Gastrocnemius medialis (tissue), 4 donors: ENCODE measurements at regions of chr1 and their contacts with region 1.

Region 1: DNA sequence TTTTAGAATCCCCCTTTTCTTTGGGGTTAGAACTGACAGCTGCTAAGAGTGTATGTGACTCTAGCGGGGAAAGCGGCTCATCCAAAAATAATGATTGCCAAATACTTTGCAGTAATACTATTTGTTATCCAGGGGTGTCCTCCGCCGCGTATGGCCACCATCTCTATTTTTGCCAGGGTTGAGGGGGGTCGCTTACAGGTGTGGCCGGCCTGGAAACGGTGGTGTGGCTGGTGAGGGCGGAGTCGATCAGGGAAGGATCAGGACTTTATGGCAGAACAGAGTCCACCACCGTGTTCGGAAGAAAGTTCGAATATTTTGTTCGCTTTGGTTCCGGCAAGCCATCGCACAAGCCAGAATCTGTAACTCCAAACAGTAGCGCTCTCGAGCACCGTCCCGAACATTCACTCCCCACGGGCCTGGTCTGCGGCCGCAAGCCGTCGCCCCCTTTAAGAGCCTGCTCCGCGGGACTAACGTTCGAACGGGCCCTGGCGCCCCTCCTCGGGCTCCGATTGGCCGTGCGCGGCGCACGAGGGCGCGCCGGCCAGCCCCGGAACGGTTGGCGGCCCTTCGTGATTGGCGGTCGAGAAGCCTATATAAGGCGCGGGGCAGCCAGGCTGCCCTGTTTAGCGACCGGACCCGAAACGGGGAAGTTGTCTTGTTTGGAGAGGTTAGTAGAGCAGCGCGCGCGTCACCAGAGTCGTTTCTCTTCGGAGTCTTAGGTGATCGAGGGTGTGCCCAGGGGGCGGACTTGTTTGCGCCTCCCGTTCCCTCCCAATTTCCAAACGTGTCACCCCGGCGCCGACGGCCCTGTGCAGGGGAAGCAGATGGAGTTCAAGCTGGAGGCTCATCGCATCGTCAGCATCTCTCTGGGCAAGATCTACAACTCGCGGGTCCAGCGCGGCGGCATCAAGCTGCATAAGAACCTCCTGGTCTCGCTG is at the start of gene IER5:
- DNase-seq: peak; percentile 97
- ATAC-seq: peak; percentile 73 to 79
- H3K4me3 ChIP-seq: peak within 1 kb of the TSS; percentile 79 to 94 (median 87)
- H3K27ac ChIP-seq: peak within 1 kb of the TSS; percentile 89 to 97 (median 96)
- H3K4me1 ChIP-seq: peaks cover 20 to 39% of the 10 kb centered on the region in 2 donors
- H3K27me3 ChIP-seq: no peaks in the 10 kb centered on the region
- CTCF ChIP-seq: peak in 1 of 5 experiments; percentile 12
- POLR2A ChIP-seq: peak; percentile 100
- total RNA-seq, gene IER5: 18.7 to 39.8 (median 26.1) TPM

Region 2: DNA sequence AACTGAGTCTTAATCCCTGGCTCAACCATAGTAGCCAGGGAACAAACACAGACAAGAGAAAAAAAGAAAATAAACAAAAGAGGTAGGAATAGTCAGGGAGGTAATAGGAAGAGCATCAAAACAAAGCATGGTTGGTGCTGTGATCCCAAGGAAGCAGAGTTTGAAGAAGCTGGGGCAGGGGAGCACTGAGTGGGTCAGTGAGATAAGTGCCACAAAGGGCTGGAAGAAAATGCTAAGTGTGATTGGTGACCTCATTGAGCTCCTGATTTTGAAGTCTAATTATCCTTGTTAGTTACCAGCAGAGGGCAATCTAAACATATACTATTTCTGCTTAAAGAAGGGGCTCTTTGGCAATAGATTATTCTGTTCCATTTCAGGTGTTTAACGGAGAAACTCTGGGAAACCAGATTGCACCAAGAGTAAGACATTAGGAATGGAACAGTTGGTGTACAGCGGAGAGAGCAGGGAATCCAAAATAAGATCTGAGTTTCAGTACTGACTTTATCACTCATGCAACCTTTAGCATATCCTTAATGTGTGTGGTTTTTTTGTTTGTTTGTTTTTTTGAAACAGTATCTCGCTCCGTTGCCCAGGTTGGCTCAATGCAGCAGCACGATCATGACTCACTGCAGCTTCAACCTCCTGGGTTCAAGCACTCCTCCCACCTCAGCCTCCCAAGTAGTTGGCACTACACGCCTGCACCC is 206.4 kb before region 1 on chr1:
- in situ Hi-C with region 1: no loop called
- intact Hi-C with region 1: loop called (anchors 5 kb)
- DNase-seq: no peak
- ATAC-seq: peak in 1 of 2 donors; percentile 56
- H3K4me3 ChIP-seq: no peak overlapping the region
- H3K27ac ChIP-seq: no peak overlapping the region
- H3K4me1 ChIP-seq: peaks cover 0 to 6% of the 10 kb centered on the region in 2 donors
- H3K27me3 ChIP-seq: no peaks in the 10 kb centered on the region
- CTCF ChIP-seq: peak; percentile 22 to 50 (median 39)
- POLR2A ChIP-seq: no peak

Region 3: DNA sequence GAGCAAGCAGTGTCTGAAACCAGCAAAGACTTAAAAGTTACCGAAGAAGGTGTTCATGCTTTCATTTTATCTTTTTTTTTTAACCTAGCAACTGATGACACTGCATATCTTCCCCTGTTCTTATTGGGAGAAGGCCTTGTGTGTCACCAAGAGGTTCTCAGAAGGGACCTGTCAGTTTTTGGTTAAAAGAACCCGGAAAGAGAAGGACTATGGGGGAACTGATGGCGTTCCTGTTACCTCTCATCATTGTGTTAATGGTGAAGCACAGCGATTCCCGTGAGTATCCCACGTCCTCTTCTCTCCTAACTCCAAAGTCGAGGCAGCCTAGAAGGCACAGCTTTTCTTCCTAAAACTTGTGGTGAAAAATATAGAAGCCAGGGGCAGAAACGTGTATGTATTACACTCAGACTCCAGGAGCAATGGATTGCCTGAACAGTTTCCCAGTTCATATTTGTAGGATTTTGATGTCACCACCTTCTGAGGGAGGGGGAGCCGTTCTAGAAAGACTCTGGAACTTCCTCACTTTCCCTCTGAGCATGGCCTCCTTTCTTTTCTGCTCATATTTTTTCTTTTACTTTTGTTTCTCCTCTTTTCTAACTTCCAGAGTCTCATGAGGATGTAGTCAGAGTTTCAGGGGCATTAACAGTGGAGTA is 54.4 kb before region 1 on chr1 and contains the start of gene MR1:
- in situ Hi-C with region 1: loop called in 1 of 4 experiments (anchors 10 kb)
- intact Hi-C with region 1: loop called (anchors 2 kb)
- DNase-seq: no peak
- ATAC-seq: peak; percentile 94
- H3K4me3 ChIP-seq: peak within 1 kb of the TSS; percentile 42 to 57 (median 49)
- H3K27ac ChIP-seq: peak within 1 kb of the TSS; percentile 84 to 91 (median 90)
- H3K4me1 ChIP-seq: peaks cover 13 to 17% of the 10 kb centered on the region in 2 donors
- H3K27me3 ChIP-seq: no peaks in the 10 kb centered on the region
- CTCF ChIP-seq: no peak
- POLR2A ChIP-seq: peak; percentile 21 to 55
- total RNA-seq, gene MR1: 1.6 to 3.5 (median 3.0) TPM

Region 4: DNA sequence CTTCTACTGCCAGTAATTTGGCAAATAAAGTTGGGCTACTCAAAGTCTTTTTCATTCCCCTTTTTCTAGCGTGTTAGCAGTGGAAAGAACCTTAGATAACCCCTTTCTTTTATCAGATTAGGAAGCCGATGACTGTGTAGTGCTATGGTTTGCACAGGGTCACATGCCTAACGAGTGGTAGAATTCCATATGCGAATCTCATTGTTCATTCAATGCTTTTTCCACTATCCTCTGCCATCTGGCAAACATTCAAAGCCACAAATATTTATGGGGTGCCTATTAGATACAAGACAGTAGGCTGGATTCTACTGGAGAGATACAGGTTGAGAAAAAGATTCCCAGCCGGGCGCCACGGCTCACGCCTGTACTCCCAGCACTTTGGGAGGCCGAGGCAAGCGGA is 14.7 kb before region 1 on chr1:
- in situ Hi-C with region 1: no loop called
- intact Hi-C with region 1: loop called (anchors 1 kb)
- DNase-seq: no peak
- ATAC-seq: no peak
- H3K4me3 ChIP-seq: no peak overlapping the region
- H3K27ac ChIP-seq: no peak overlapping the region
- H3K4me1 ChIP-seq: peaks cover 0 to 6% of the 10 kb centered on the region in 2 donors
- H3K27me3 ChIP-seq: no peaks in the 10 kb centered on the region
- CTCF ChIP-seq: no peak
- POLR2A ChIP-seq: no peak

Region 5: DNA sequence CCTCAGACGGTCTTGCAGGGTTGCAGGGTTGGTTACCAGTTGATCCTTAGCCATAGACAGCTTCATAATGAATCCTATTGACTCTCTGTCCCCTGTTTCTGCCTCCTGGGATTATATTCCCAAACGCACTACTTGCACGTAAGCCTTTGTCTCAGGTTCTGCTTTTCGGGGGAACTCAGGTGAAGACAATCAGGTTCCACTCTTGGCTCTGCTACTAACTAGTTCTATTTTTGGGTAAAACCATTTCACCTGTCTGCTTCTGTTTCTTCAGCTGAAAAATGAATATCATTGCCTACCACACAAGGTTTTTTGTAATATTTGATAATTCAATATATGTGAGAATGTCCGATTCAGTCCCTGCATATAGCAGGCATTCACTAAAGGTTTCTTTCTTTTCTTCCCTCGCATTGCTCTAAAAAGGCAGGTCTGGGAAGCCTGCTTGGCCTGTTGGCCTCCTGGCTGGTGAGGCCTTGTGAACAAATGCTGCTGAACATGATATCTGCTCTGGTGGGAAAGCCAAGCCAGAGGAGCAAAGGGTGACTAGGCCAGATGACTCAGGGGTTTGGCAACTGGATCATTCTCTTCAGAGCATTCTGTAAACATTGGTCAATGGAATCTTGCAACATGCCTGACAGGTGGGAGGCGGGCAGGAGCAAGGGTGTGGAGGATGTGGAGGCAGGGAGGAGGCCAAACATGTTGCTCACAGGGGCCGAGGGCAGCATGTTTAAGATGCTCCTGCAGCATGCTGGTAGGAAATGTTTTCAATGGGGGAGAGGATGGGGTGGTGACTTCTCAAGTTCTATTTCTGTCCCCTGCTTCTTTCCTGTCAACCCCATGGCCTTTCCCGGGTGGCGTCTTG is 24.0 kb after region 1 on chr1:
- in situ Hi-C with region 1: no loop called
- intact Hi-C with region 1: loop called (anchors 1 kb)
- DNase-seq: peak; percentile 98 to 99
- ATAC-seq: peak; percentile 94 to 96
- H3K4me3 ChIP-seq: peak overlapping the region in 2 of 4 donors; percentile 4 to 31
- H3K27ac ChIP-seq: peak overlapping the region; percentile 87 to 95 (median 91)
- H3K4me1 ChIP-seq: peaks cover 28 to 32% of the 10 kb centered on the region in 2 donors
- H3K27me3 ChIP-seq: no peaks in the 10 kb centered on the region
- CTCF ChIP-seq: no peak
- POLR2A ChIP-seq: peak; percentile 60 to 78

Region 6: GRCh38 chr1:181152892-181153633 is 64.7 kb after region 1 on chr1:
- in situ Hi-C with region 1: loop called in 3 of 4 experiments (anchors 5 to 10 kb)
- intact Hi-C with region 1: loop called (anchors 1 kb)
- DNase-seq: peak; percentile 94 to 98
- ATAC-seq: peak; percentile 78 to 79
- H3K4me3 ChIP-seq: no peak overlapping the region
- H3K27ac ChIP-seq: peak overlapping the region; percentile 93 to 99 (median 98)
- H3K4me1 ChIP-seq: peaks cover 48 to 55% of the 10 kb centered on the region in 2 donors
- H3K27me3 ChIP-seq: no peaks in the 10 kb centered on the region
- CTCF ChIP-seq: peak in 4 of 5 experiments; percentile 41 to 57 (median 42)
- POLR2A ChIP-seq: peak; percentile 66 to 85